Kidney (tissue), 22 donors: ENCODE measurements at regions of chr10 and their contacts with region 1.

Region 1: DNA sequence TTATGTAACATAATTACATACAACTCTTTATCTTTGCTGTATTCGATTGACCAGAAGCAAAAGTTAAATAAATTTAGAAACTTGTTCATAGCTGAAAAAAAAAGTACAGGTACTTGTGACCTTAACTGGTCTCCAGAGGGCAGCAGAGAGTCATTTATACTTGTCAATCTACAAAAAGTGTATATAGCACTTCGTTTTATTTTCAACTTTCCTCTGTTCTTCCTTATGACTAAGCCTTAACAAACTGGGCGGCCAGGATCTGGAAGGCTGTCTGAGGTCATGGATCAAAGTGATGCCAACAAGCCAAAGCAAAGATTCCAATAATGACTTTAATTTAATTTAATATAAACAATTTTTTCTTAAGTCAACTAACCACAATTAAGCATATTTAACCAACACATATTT is 29.8 kb downstream of the C10orf67 start:
- DNase-seq: peak in 3 of 5 donors; percentile 43 to 91 (median 83)
- H3K4me3 ChIP-seq: no peak overlapping the region
- H3K27ac ChIP-seq: no peak overlapping the region
- H3K4me1 ChIP-seq: no peaks in the 10 kb centered on the region
- H3K27me3 ChIP-seq: no peaks in the 10 kb centered on the region
- CTCF ChIP-seq: peak; percentile 69

Region 2: GRCh38 chr10:23481411-23481961 is 166.6 kb after region 1 on chr10:
- intact Hi-C with region 1: no loop called
- DNase-seq: no peak
- H3K4me3 ChIP-seq: no peak overlapping the region
- H3K27ac ChIP-seq: no peak overlapping the region
- H3K4me1 ChIP-seq: no peaks in the 10 kb centered on the region
- H3K27me3 ChIP-seq: no peaks in the 10 kb centered on the region
- CTCF ChIP-seq: no peak

Region 3: DNA sequence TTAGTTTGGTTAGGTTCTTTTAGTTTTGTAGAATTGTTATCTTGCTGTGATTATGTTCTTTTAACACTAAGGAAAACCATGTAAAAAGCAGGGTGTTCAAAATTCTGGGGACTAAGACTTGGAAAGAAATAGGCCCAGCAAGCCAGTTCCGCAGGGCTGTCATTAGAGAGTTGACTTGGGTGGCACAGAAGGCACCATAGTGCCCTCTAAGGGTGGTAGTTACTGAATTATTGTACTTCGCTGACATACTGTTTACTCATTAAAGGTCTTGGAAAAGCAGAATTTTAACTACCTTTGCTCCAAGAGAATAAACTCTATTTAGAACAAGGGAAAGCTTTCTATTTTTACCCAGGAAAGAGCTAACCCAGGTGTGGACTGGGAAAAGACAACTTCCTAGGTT is 210.6 kb after region 1 on chr10:
- intact Hi-C with region 1: loop called (anchors 10 kb)
- DNase-seq: peak in 2 of 5 donors; percentile 30 to 38
- H3K4me3 ChIP-seq: no peak overlapping the region
- H3K27ac ChIP-seq: no peak overlapping the region
- H3K4me1 ChIP-seq: no peaks in the 10 kb centered on the region
- H3K27me3 ChIP-seq: no peaks in the 10 kb centered on the region
- CTCF ChIP-seq: peak; percentile 48

Region 4: DNA sequence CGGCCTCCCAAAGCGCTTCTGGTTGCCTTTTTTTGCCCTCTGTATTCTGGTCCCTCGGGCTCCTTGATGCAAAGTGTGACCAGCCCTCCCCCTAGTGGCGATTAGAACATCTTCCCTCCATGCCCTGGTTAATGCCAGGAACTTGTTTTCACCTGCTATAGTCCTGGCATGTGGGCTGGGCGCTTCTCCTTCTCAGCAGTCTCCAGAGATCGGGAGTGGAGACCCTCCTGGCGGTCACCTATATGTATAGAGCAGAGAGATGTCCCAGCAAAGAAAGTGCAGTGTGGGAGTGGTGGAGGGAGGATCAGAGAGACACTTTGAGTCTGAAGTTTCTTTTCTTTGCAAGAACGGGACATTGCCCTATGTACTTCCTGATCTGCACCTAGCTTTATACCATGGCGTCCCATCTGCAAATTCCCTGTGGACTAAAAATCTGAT is 388.2 kb after region 1 on chr10:
- intact Hi-C with region 1: loop called (anchors 5 kb)
- DNase-seq: peak; percentile 68 to 92 (median 76)
- H3K4me3 ChIP-seq: peak overlapping the region; percentile 13 to 57 (median 56)
- H3K27ac ChIP-seq: no peak overlapping the region
- H3K4me1 ChIP-seq: peaks cover 0 to 3% (median 0%) of the 10 kb centered on the region in 3 donors
- H3K27me3 ChIP-seq: no peaks in the 10 kb centered on the region
- CTCF ChIP-seq: peak; percentile 74